Breast epithelium (tissue), 4 donors: ENCODE measurements at regions of chr4 and their contacts with region 1.

Region 1: DNA sequence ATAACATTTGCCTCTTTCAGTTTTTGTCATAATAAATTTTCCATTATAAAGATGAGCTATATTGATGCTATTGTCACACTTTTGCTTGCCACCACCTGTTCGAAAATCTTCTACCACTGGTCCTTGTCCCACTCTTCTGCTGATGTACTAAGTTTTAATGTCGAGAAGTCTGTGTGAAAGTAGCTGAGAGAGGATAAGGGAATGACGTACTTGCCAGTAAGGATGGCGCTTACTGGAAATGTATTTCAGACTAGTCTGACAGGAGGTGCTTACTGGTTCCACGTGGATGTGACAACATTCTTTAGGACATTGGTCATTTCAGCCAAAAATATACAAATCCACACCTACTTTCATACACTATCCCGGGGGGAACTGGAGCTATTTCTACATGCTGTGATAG is 132.7 kb upstream of the NR3C2 start:
- DNase-seq: no peak
- H3K4me3 ChIP-seq: no peak overlapping the region
- H3K27ac ChIP-seq: no peak overlapping the region
- H3K4me1 ChIP-seq: no peaks in the 10 kb centered on the region
- H3K27me3 ChIP-seq: no peaks in the 10 kb centered on the region
- CTCF ChIP-seq: no peak
- POLR2A ChIP-seq: no peak

Region 2: GRCh38 chr4:148589182-148589581 is 14.3 kb after region 1 on chr4:
- intact Hi-C with region 1: loop called (anchors 1 kb)
- DNase-seq: no peak
- H3K4me3 ChIP-seq: no peak overlapping the region
- H3K27ac ChIP-seq: no peak overlapping the region
- H3K4me1 ChIP-seq: no peaks in the 10 kb centered on the region
- H3K27me3 ChIP-seq: no peaks in the 10 kb centered on the region
- CTCF ChIP-seq: no peak
- POLR2A ChIP-seq: no peak

Region 3: GRCh38 chr4:149426461-149426860 is 851.5 kb after region 1 on chr4:
- intact Hi-C with region 1: no loop called
- DNase-seq: no peak
- H3K4me3 ChIP-seq: no peak overlapping the region
- H3K27ac ChIP-seq: no peak overlapping the region
- H3K4me1 ChIP-seq: no peaks in the 10 kb centered on the region
- H3K27me3 ChIP-seq: no peaks in the 10 kb centered on the region
- CTCF ChIP-seq: no peak
- POLR2A ChIP-seq: no peak